ENCODE measurements at regions of chr12 and their contacts with region 1.

Region 1: DNA sequence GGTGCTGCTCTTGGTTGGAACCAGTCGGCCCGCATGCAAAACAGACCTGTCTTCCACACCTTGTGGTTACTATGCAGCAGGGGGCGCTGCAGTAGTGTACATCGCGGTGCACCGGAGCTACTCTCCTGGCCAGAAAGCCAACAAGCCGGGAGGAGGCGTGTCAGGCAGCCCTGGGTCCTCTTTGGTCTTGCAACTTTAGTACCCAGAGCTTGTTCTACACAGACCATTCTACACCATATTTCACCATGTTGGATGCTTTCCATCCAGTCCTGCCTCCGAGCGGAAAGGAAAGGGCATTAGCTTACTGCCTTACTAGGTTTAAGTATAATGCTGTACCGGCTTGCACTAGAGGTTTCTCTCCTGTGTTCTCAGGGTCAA is 927 bp upstream of the TMTC2 start:
- DNase-seq: peak; percentile 80 to 96
- ATAC-seq: peak; percentile 63 to 84
- H3K4me3 ChIP-seq: peak overlapping the region; percentile 85
- H3K27ac ChIP-seq: peak overlapping the region; percentile 73 to 92
- H3K4me1 ChIP-seq: peaks cover 24% of the 10 kb centered on the region
- CTCF ChIP-seq: peak; percentile 91
- EP300 ChIP-seq: no peak
- POLR2A ChIP-seq: no peak
- RAD21 ChIP-seq: peak; percentile 93 to 96

Region 2: DNA sequence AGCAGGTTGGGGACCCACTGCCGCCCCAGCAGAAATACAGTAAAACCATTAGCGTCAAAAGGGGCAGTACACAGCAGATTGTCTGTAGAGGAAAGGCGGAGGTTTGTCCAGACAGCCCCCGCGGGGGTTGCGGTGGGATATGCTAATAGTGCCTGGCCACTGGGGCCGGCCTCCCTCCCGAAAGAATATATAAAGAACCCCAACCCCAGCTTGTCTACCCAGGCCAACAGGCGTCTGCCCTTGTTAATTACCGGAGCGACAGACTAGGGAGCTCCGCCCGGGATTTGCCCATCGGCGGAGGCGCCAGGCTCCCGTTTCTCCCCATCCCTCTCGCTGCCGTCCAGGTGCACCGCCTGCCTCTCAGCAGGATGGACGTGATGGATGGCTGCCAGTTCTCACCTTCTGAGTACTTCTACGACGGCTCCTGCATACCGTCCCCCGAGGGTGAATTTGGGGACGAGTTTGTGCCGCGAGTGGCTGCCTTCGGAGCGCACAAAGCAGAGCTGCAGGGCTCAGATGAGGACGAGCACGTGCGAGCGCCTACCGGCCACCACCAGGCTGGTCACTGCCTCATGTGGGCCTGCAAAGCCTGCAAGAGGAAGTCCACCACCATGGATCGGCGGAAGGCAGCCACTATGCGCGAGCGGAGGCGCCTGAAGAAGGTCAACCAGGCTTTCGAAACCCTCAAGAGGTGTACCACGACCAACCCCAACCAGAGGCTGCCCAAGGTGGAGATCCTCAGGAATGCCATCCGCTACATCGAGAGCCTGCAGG is 1968.9 kb before region 1 on chr12 and contains the start of gene MYF5:
- CTCF ChIA-PET with region 1: no interaction called
- POLR2A ChIA-PET with region 1: no interaction called
- DNase-seq: no peak
- ATAC-seq: no peak
- H3K4me3 ChIP-seq: no peak within 1 kb of the TSS
- H3K27ac ChIP-seq: no peak within 1 kb of the TSS
- H3K4me1 ChIP-seq: no peaks in the 10 kb centered on the region
- CTCF ChIP-seq: no peak
- EP300 ChIP-seq: no peak
- POLR2A ChIP-seq: no peak
- RAD21 ChIP-seq: no peak
- polyA plus RNA-seq, gene MYF5: not detected in 2 replicates

Region 3: GRCh38 chr12:82650619-82651337 is 35.0 kb before region 1 on chr12:
- CTCF ChIA-PET with region 1: interaction called, 11 read pairs
- POLR2A ChIA-PET with region 1: no interaction called
- DNase-seq: peak; percentile 40 to 96
- ATAC-seq: peak; percentile 98 to 99
- H3K4me3 ChIP-seq: no peak overlapping the region
- H3K27ac ChIP-seq: peak overlapping the region; percentile 75 to 77
- H3K4me1 ChIP-seq: peaks cover 24% of the 10 kb centered on the region
- CTCF ChIP-seq: no peak
- EP300 ChIP-seq: peak in 1 of 2 experiments; percentile 41; a peak in 1 of 5 replicates
- POLR2A ChIP-seq: no peak
- RAD21 ChIP-seq: no peak

Region 4: DNA sequence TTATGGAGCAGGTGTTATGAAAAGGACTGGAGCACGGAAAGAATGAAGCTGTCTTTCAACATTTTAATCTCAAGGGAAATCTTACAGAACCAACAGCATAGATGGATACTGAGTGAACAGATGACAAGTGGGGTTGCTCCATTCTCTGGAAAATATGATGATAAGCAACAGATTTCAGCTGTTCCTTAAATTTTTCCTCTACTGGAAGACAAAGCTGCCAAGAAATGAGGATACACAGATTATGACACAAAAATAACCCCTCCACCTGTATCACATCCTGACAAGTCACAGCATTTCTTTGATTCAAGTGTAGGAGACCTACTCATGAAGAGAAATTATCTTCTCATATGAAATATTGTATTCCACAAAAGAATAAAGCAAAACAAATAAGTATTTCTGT is 12.1 kb before region 1 on chr12:
- CTCF ChIA-PET with region 1: interaction called, 27 read pairs
- POLR2A ChIA-PET with region 1: no interaction called
- DNase-seq: no peak
- ATAC-seq: no peak
- H3K4me3 ChIP-seq: no peak overlapping the region
- H3K27ac ChIP-seq: no peak overlapping the region
- H3K4me1 ChIP-seq: no peaks in the 10 kb centered on the region
- CTCF ChIP-seq: no peak
- EP300 ChIP-seq: no peak
- POLR2A ChIP-seq: no peak
- RAD21 ChIP-seq: no peak

Region 5: GRCh38 chr12:82883394-82884350 is 197.9 kb after region 1 on chr12:
- CTCF ChIA-PET with region 1: no interaction called
- POLR2A ChIA-PET with region 1: no interaction called
- DNase-seq: no peak
- ATAC-seq: no peak
- H3K4me3 ChIP-seq: no peak overlapping the region
- H3K27ac ChIP-seq: no peak overlapping the region
- H3K4me1 ChIP-seq: no peaks in the 10 kb centered on the region
- CTCF ChIP-seq: no peak
- EP300 ChIP-seq: no peak
- POLR2A ChIP-seq: no peak
- RAD21 ChIP-seq: no peak

Region 6: DNA sequence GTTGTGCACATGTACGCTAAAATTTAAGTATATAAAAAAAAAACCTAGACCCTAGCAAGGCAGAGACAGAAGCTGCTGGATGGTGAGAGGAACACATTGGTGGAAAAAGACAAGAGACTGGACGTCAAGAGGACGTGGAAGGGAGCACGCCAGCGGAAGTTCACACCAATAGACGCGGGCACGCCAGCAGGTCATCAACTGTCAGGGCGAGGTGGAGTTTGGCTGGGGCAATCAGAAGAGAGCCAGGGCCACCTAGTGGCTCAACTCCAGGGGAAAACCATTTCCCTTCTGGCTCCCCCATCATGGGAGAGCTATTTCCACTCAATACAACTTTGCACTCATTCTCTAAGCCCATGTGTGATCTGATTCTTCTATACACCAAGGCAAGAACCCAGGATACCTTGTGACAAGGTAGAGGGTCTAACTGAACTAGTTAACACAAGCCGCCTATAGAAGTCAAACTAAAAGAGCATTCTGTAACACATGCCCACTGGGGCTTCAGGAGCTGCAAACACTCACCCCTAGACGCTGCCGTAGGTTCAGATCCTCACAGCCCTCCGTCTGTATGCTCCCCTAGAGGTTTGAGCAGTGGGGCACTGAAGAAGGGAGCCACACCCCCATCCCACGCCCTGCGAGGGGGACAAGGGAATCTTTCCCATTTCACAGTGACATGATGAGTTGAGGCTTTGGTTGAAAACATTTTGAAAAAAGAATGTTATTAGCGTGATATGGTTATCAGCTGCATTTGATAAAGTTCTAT is 703.6 kb after region 1 on chr12:
- CTCF ChIA-PET with region 1: interaction called, 21 read pairs
- POLR2A ChIA-PET with region 1: no interaction called
- DNase-seq: peak in 1 of 2 experiments; percentile 38
- ATAC-seq: peak in 1 of 2 experiments; percentile 77; a peak in 3 of 6 replicates
- H3K4me3 ChIP-seq: no peak overlapping the region
- H3K27ac ChIP-seq: no peak overlapping the region
- H3K4me1 ChIP-seq: no peaks in the 10 kb centered on the region
- CTCF ChIP-seq: 0 out of 3 replicates have a peak, but pooled peaks have one; percentile 7
- EP300 ChIP-seq: no peak
- POLR2A ChIP-seq: no peak
- RAD21 ChIP-seq: peak in 1 of 2 experiments; percentile 52; a peak in 2 of 5 replicates

Region 7: DNA sequence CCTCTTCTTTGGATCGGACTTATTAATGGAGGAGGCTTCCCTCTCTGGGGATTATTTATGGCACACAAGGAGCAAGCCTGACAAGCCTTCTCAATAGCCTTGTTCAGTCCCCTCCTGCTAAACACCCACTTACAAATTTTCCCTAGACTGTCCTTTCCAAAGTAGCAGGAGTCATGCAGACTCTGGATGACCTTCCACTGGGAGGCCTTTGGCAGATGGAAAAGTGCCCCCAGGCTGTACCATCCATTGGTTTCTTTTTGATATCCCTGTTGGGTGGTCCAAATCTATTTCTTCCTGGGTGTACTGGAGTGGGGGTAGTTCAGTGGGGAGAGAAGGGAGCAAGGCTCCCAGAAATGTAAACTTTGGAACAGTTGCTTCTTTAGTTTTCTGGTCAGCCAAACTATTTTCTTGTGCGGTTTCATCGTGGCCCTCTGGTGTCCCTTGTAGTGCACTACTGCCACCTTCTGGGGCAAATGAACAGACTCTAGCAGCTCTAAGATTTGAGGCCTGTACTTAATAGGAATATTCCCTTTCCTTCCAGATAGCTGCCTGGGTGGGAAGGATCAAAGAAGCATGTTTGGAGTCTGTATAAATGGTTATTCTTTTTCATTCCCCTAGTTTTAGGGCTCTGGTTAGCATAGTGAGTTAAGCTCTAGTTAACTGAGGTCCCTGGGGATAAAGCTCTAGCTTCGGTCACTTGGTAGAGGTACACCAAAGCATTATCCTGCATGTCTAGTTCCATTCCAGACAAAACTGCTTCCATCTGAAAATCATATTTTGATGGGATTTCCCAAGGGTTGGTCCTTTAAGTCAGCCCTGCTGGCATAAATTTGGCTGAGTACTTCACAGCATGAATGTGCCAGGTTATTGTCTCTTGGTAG is 1817.4 kb after region 1 on chr12:
- CTCF ChIA-PET with region 1: interaction called, 23 read pairs
- POLR2A ChIA-PET with region 1: no interaction called
- DNase-seq: peak; percentile 25 to 69
- ATAC-seq: peak; percentile 82 to 94; a peak in 5 of 6 replicates
- H3K4me3 ChIP-seq: no peak overlapping the region
- H3K27ac ChIP-seq: no peak overlapping the region
- H3K4me1 ChIP-seq: no peaks in the 10 kb centered on the region
- CTCF ChIP-seq: peak; percentile 51
- EP300 ChIP-seq: no peak
- POLR2A ChIP-seq: no peak
- RAD21 ChIP-seq: peak; percentile 61 to 82